Heart right ventricle (tissue), 16 donors: ENCODE measurements at regions of chr1 and their contacts with region 1.

Region 1: DNA sequence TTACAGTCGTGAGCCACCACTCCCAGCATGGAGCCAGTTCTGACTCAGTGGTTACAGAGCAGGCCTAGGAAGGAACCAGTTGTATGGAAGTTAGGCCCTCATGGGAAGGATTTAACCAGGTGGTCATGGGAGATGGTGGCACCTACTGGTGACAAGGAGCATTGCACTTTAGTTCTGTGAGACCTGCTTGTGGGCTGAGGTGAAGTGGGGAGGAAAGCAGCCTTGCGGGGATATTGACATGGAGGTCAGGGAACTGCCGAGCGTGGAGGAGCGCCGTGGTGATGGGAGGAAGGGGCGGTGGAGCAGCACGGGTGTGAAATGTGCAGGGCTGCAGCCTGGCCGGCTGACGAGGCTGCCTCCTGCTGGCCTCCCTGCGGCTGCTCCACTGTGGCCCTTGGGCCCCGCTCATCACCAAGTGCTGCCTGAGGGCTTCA is 100.4 kb downstream of the GALNT2 start:
- DNase-seq: no peak
- ATAC-seq: peak in 4 of 8 donors; percentile 26 to 47 (median 32)
- H3K4me3 ChIP-seq: no peak overlapping the region
- H3K27ac ChIP-seq: no peak overlapping the region
- H3K4me1 ChIP-seq: peaks cover 0 to 57% (median 20%) of the 10 kb centered on the region in 9 donors
- H3K27me3 ChIP-seq: no peaks in the 10 kb centered on the region
- CTCF ChIP-seq: peak; percentile 18 to 78 (median 67)

Region 2: DNA sequence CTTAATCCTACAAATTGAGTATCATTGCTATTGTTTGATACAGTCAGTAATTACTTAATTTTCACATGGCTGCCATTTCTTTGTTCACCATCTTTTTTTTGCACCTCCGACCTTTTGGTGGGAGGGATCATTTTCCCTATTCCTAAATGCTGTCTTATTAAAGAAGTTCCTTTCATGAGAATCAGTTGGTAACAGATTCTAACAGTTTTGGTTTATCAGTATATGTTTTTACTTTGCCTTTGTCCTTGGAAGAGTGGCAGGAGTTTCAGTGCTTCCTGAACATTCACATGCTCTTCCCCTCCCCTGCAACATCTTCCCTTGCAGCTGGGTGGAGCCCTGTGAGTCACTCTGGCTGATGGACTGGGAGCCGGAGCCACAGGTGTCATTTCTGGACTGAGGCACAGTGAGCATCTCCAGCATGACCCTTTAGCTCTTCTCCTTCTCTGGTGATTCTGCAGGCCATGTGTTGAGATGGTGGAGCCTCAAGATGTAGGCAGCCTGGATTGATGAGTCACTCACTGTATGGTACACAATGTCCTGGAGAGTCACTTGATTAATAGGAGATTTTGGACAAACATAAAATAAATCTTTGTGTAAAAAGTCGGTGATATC is 323.7 kb before region 1 on chr1:
- intact Hi-C with region 1: loop called in 1 of 10 experiments (anchors 5 kb)
- DNase-seq: peak in 1 of 2 donors; percentile 28
- ATAC-seq: peak; percentile 49 to 89 (median 86)
- H3K4me3 ChIP-seq: no peak overlapping the region
- H3K27ac ChIP-seq: no peak overlapping the region
- H3K4me1 ChIP-seq: peaks cover 0 to 13% (median 7%) of the 10 kb centered on the region in 9 donors
- H3K27me3 ChIP-seq: no peaks in the 10 kb centered on the region
- CTCF ChIP-seq: peak in 8 of 9 donors; percentile 12 to 59 (median 45)

Region 3: DNA sequence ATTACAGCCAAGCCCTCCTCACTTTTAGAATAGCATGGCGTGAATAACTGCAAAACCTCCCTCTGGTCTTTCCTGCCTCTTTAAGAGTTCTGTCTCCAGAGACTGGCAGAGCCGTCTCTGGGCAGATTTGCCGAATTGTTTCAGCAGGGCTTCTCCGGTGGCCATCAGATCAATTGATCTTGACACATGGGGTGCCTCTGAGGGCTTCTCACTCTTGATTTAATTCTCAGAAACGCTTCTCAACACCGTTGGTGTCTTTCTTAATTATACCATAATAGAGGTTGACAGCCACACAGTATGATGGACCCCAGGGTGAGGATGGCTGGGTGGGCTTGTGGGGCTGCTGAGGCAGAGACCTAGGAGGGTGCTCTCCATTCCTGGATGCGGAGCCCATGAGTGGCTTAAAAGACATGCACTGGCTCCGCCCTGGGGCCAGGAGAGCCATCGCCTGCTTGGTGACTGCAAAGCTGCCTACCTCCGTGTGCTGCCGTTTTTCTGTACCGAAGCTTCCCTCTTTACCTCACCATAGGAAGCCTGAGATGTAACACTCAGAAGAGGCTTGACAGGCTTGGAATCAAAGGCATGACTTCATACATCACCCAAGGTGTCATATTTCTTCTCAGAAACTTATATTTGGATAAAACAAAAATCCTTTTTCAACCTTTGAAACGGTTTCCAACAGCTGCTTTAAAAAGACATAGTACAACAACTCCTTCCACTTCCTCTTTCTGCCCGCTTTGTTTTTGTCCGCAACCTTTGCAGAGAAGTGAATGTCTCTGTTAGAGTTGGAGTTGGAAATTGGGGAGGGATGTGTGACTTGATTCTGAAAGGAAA is 17.5 kb before region 1 on chr1:
- intact Hi-C with region 1: no loop called
- DNase-seq: no peak
- ATAC-seq: no peak
- H3K4me3 ChIP-seq: peak overlapping the region in 1 of 10 donors; percentile 24
- H3K27ac ChIP-seq: peak overlapping the region in 1 of 10 donors; percentile 70
- H3K4me1 ChIP-seq: peaks cover 8 to 75% (median 58%) of the 10 kb centered on the region in 9 donors
- H3K27me3 ChIP-seq: no peaks in the 10 kb centered on the region
- CTCF ChIP-seq: no peak

Region 4: GRCh38 chr1:230772457-230773395 is 605.3 kb after region 1 on chr1:
- intact Hi-C with region 1: no loop called
- DNase-seq: peak; percentile 52 to 76
- ATAC-seq: peak; percentile 81 to 91 (median 86)
- H3K4me3 ChIP-seq: peak overlapping the region in 2 of 10 donors; percentile 13 to 16
- H3K27ac ChIP-seq: peak overlapping the region in 5 of 10 donors; percentile 7 to 67 (median 52)
- H3K4me1 ChIP-seq: peaks cover 0 to 21% (median 7%) of the 10 kb centered on the region in 9 donors
- H3K27me3 ChIP-seq: peaks cover 0 to 7% (median 0%) of the 10 kb centered on the region in 7 donors
- CTCF ChIP-seq: peak; percentile 43 to 79 (median 58)